ENCODE measurements at regions of chr6 and their contacts with region 1.

Region 1: GRCh38 chr6:8219352-8219943 is 117.1 kb upstream of the EEF1E1 start:
- DNase-seq: peak in 2 of 5 donors; percentile 24 to 27
- H3K4me3 ChIP-seq: no peak overlapping the region
- H3K27ac ChIP-seq: no peak overlapping the region
- H3K4me1 ChIP-seq: no peaks in the 10 kb centered on the region
- H3K27me3 ChIP-seq: no peaks in the 10 kb centered on the region
- CTCF ChIP-seq: peak in 2 of 3 donors; percentile 45 to 48
- EP300 ChIP-seq: no peak
- POLR2A ChIP-seq: no peak

Region 2: GRCh38 chr6:8131256-8131897 is 88.1 kb before region 1 on chr6:
- intact Hi-C with region 1: loop called in 1 of 4 experiments (anchors 5 kb)
- DNase-seq: peak in 3 of 5 donors; percentile 16 to 30 (median 24)
- H3K4me3 ChIP-seq: no peak overlapping the region
- H3K27ac ChIP-seq: no peak overlapping the region
- H3K4me1 ChIP-seq: no peaks in the 10 kb centered on the region
- H3K27me3 ChIP-seq: no peaks in the 10 kb centered on the region
- CTCF ChIP-seq: peak in 1 of 3 donors; percentile 37
- EP300 ChIP-seq: no peak
- POLR2A ChIP-seq: no peak

Measured in ovary (tissue), 10 donors.